ENCODE measurements at regions of chr6 and their contacts with region 1.

Region 1: DNA sequence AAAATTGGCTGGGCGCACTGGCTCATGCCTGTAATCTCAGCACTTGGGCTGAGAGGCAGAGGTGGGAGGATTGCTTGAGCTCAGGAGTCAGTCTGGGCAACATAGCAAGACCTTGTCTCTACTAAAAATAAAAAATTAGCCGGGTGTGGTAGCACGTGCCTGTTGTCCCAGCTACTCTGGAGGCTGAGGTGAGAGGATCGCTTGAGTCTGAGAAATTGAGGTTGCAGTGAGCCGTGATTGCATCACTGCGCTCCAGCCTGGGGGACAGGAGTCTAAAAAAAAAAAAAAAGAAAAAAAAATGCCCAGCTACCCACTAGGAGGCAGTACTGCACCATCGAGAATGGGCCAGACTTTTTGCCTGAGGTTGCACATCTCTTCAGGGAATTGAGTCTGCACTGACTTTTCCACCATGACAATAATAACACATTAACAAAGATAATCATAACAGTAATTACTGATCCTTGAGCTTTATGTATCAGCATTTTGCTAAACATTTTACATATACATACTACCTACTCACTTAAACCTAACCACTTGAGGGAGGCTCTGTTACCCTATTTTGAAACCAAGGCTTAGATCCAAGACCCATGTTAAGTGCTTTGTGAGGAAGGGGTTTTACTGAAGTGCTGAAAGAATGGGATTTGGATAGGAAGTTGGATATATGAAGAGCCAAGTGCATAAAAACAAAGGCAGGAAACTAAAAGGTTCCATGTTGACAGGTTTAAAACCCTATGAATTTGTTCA is 21.0 kb downstream of the SRSF3 start:
- DNase-seq: peak; percentile 55
- ATAC-seq: peak; percentile 52
- H3K4me3 Mint-ChIP-seq: no peak overlapping the region
- H3K27ac Mint-ChIP-seq: peak overlapping the region; percentile 4
- H3K4me1 Mint-ChIP-seq: peaks cover 13% of the 10 kb centered on the region
- H3K27me3 Mint-ChIP-seq: no peaks in the 10 kb centered on the region

Region 2: DNA sequence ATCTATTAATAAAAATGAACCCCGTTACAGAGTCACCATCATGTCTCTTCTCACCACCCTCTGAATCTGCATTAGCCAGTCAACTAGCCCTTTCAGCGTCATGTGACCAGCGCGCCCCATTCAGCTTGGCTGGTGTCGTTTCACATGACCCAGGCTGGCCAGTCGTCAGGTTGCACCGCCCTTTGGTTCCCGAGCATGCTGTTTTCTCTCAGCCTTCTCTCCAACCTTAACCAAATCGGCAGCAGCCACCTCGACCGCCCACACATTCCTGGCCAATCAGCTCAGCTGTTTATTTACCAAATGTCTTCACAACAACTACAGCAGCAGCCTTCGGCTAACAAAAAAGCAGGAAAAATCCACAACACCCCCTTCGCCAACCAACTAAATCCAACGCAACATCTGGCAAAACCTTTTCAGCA is 15.4 kb before region 1 on chr6:
- CTCF ChIA-PET with region 1: interaction called, 17 read pairs
- DNase-seq: peak; percentile 87
- ATAC-seq: peak; percentile 83
- H3K4me3 Mint-ChIP-seq: peak overlapping the region; percentile 98
- H3K27ac Mint-ChIP-seq: peak overlapping the region; percentile 79
- H3K4me1 Mint-ChIP-seq: peaks cover 73% of the 10 kb centered on the region
- H3K27me3 Mint-ChIP-seq: no peaks in the 10 kb centered on the region

Region 3: GRCh38 chr6:36678518-36679027 is 63.4 kb after region 1 on chr6 and contains the start of gene CDKN1A:
- CTCF ChIA-PET with region 1: interaction called, 40 read pairs
- DNase-seq: peak; percentile 87
- ATAC-seq: peak; percentile 71
- H3K4me3 Mint-ChIP-seq: peak within 1 kb of the TSS; percentile 97
- H3K27ac Mint-ChIP-seq: peak within 1 kb of the TSS; percentile 98
- H3K4me1 Mint-ChIP-seq: peaks cover 61% of the 10 kb centered on the region
- H3K27me3 Mint-ChIP-seq: no peaks in the 10 kb centered on the region
- total RNA-seq, gene CDKN1A: 67.5 to 109 TPM

Region 4: GRCh38 chr6:36724514-36725390 is 109.6 kb after region 1 on chr6:
- CTCF ChIA-PET with region 1: interaction called, 12 read pairs
- DNase-seq: peak; percentile 75
- ATAC-seq: no peak
- H3K4me3 Mint-ChIP-seq: no peak overlapping the region
- H3K27ac Mint-ChIP-seq: no peak overlapping the region
- H3K4me1 Mint-ChIP-seq: peaks cover 24% of the 10 kb centered on the region
- H3K27me3 Mint-ChIP-seq: no peaks in the 10 kb centered on the region

Region 5: DNA sequence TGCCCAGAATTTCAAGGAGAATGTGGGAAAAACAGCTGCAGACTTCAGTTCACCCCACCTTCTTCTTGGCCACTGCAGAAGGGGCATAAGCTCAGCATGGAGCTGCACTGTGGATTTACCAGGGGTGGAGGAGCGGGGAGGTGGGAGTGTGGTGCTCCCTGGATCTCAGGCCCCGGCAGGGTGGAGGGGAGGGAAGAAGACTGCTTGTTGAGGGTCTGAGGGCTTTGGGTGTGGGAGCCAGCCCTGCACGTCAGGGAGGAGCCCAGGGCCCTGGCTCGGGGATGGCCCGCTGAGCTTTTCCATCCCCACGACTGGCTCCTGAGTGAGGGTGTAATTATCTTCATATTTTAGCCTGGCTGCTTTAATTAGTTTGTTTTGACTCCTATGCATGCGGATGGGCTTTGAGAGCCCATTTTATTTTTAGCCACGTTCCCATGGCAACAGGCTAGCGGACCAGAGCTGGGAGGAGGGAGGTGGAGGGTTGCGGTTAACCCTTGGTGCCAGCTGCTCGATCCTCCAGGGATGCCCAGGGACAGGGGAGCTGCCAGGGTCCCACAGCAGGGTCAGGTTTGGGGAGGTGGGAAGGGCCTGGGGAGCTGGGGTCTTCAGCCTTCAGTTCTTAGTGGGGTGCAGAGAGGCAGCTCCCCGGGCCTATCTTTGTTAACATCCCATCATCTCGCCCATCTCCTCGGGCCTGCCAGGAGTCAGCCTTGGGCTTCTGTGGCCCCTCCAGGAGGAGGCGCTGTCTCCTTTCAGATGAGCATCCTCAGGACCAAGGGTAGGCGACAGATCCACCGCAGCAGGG is 150.6 kb after region 1 on chr6:
- CTCF ChIA-PET with region 1: interaction called, 112 read pairs
- DNase-seq: peak; percentile 90
- ATAC-seq: peak; percentile 93
- H3K4me3 Mint-ChIP-seq: no peak overlapping the region
- H3K27ac Mint-ChIP-seq: no peak overlapping the region
- H3K4me1 Mint-ChIP-seq: peaks cover 37% of the 10 kb centered on the region
- H3K27me3 Mint-ChIP-seq: no peaks in the 10 kb centered on the region

Region 6: GRCh38 chr6:36780442-36781177 is 165.4 kb after region 1 on chr6:
- CTCF ChIA-PET with region 1: interaction called, 14 read pairs
- DNase-seq: no peak
- ATAC-seq: no peak
- H3K4me3 Mint-ChIP-seq: no peak overlapping the region
- H3K27ac Mint-ChIP-seq: no peak overlapping the region
- H3K4me1 Mint-ChIP-seq: peaks cover 5% of the 10 kb centered on the region
- H3K27me3 Mint-ChIP-seq: peaks cover 30% of the 10 kb centered on the region

Region 7: DNA sequence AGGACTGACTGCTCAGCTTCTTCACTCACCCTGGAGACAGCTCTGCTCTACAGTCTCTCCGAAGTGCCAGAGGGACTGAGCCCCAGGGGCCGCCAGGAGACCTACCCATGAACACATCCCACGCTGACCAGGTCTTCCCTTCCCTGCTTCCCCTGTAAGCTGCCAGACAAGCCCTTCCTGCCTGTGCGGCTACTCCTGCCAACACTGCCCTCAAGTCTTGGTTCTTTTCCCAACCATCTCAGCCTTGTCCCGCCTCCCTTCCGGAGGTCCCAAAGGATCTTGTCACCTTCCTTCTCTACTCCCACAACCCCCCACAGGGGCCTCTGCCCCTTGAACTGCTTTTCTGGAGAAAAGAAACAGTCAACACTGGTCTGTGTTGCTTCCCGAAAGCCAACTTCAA is 209.1 kb after region 1 on chr6:
- CTCF ChIA-PET with region 1: no interaction called
- DNase-seq: no peak
- ATAC-seq: no peak
- H3K4me3 Mint-ChIP-seq: no peak overlapping the region
- H3K27ac Mint-ChIP-seq: no peak overlapping the region
- H3K4me1 Mint-ChIP-seq: peaks cover 27% of the 10 kb centered on the region
- H3K27me3 Mint-ChIP-seq: peaks cover 6% of the 10 kb centered on the region